Dorsolateral prefrontal cortex (tissue), 120 donors: ENCODE measurements at regions of chr14 and their contacts with region 1.

Region 1: GRCh38 chr14:50532502-50533240 is at the start of gene MAP4K5:
- DNase-seq: peak; percentile 84 to 94 (median 92)
- H3K4me3 ChIP-seq: peak within 1 kb of the TSS; percentile 52 to 98 (median 91)
- H3K27ac ChIP-seq: peak within 1 kb of the TSS; percentile 76 to 99 (median 97)
- H3K27me3 ChIP-seq: no peaks in the 10 kb centered on the region
- CTCF ChIP-seq: peak; percentile 72 to 99 (median 92)
- total RNA-seq, gene MAP4K5: 52.1 to 233 (median 97.3) TPM

Region 2: DNA sequence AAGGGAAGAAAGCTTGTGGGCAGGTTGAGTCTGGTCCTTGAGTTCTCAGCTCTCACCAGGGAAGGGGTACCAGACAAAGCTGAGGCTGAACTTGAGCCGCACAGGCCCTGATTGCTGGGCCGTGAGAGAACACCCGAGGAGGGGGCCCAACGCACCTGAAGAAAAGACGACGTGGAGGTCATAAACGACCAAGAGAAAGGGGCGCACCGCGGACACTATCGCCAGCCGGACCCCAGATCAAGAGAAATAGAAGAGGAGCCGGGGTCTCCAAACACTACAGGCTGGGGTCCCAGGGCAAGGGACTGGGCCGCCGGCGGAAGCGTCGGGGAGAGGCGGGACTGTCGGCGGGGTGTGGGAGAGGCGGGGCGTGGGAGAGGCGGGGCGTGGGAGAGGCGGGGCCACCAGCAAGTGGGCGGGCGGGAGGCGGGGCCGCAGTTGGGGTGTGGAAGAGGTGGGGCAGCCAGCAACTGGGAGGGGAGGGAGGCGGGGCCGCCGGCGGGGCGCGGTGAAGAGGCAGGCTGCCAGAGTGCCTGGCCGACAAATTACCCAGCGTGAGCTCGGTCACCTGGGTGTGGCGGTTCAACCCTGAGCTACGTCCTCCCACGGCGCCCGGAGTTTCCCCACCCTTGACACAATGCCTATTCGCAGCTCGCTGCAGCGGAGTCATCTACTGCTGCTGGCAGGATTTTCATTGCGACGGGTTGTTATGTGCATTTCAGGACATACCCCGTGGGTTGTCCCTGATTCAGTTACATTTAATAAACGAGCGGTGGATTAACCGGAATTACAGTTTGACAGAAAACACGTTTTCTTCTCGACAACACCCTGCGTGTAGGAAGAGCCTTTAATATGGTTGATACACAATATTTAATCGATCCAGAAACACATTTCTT is 664.6 kb before region 1 on chr14:
- intact Hi-C with region 1: loop called (anchors 5 kb)
- DNase-seq: peak; percentile 86 to 97 (median 89)
- H3K4me3 ChIP-seq: peak overlapping the region; percentile 27 to 87 (median 76)
- H3K27ac ChIP-seq: peak overlapping the region in 58 of 59 donors; percentile 45 to 96 (median 87)
- H3K27me3 ChIP-seq: no peaks in the 10 kb centered on the region
- CTCF ChIP-seq: peak in 26 of 56 donors; percentile 6 to 50 (median 22)

Region 3: GRCh38 chr14:50231475-50232275 is 301.0 kb before region 1 on chr14 and contains the start of gene SOS2:
- intact Hi-C with region 1: loop called in 1 of 2 experiments (anchors 2 kb)
- DNase-seq: peak; percentile 77 to 89 (median 84)
- H3K4me3 ChIP-seq: peak within 1 kb of the TSS; percentile 53 to 90 (median 79)
- H3K27ac ChIP-seq: peak within 1 kb of the TSS; percentile 83 to 100 (median 96)
- H3K27me3 ChIP-seq: no peaks in the 10 kb centered on the region
- CTCF ChIP-seq: peak in 51 of 56 donors; percentile 6 to 69 (median 33)
- total RNA-seq, gene SOS2: 23.8 to 58.9 (median 37.3) TPM

Region 4: DNA sequence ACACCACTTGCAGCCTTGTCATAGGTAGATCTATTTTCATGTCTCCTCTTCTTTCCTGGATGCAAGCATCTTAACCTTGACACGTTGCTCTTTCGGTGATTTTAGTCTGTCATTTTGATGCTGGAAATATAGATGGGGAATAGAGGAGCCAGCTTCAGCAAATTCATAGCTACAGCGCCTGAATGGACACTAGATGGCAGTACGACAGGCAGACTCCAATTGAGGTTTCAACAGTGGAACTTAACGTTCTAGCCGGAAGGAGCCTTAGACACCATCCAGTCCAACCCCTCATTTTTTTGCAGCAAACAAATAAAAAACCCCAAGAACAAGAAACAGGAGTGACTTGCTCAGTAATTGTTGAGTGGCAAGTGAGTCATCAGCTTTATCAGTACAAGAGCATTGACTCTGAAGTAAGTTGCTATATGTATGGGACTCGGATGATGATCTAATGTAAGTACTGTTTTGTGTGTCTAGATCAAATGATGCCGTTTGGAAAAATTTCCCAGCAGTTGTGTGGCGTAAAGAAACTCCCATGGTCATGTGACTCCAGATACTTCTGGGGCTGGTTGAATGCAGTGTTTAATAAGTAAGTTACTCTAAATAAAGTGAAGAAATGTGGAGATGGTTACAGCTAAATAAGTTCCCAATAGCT is 211.5 kb before region 1 on chr14:
- intact Hi-C with region 1: loop called in 1 of 2 experiments (anchors 1 kb)
- DNase-seq: peak in 8 of 10 donors; percentile 56 to 77 (median 66)
- H3K4me3 ChIP-seq: peak overlapping the region in 54 of 59 donors; percentile 2 to 61 (median 34)
- H3K27ac ChIP-seq: peak overlapping the region; percentile 12 to 91 (median 78)
- H3K27me3 ChIP-seq: no peaks in the 10 kb centered on the region
- CTCF ChIP-seq: peak; percentile 73 to 93 (median 86)

Region 5: GRCh38 chr14:50342221-50343078 is 190.2 kb before region 1 on chr14:
- intact Hi-C with region 1: loop called (anchors 2 to 5 kb)
- DNase-seq: peak; percentile 54 to 86 (median 80)
- H3K4me3 ChIP-seq: peak overlapping the region in 57 of 59 donors; percentile 5 to 59 (median 32)
- H3K27ac ChIP-seq: peak overlapping the region in 58 of 59 donors; percentile 7 to 92 (median 80)
- H3K27me3 ChIP-seq: no peaks in the 10 kb centered on the region
- CTCF ChIP-seq: peak; percentile 25 to 79 (median 58)

Region 6: GRCh38 chr14:50497351-50497750 is 35.3 kb before region 1 on chr14:
- intact Hi-C with region 1: no loop called
- DNase-seq: no peak
- H3K4me3 ChIP-seq: peak overlapping the region in 7 of 59 donors; percentile 1 to 16 (median 7)
- H3K27ac ChIP-seq: peak overlapping the region in 47 of 59 donors; percentile 2 to 98 (median 55)
- H3K27me3 ChIP-seq: no peaks in the 10 kb centered on the region
- CTCF ChIP-seq: no peak

Region 7: GRCh38 chr14:50520947-50521815 is 11.5 kb before region 1 on chr14:
- intact Hi-C with region 1: no loop called
- DNase-seq: peak in 3 of 10 donors; percentile 36 to 54 (median 45)
- H3K4me3 ChIP-seq: peak overlapping the region in 18 of 59 donors; percentile 1 to 54 (median 17)
- H3K27ac ChIP-seq: peak overlapping the region in 57 of 59 donors; percentile 0 to 99 (median 66)
- H3K27me3 ChIP-seq: no peaks in the 10 kb centered on the region
- CTCF ChIP-seq: no peak